ENCODE measurements at regions of chr20 and their contacts with region 1.

Region 1: DNA sequence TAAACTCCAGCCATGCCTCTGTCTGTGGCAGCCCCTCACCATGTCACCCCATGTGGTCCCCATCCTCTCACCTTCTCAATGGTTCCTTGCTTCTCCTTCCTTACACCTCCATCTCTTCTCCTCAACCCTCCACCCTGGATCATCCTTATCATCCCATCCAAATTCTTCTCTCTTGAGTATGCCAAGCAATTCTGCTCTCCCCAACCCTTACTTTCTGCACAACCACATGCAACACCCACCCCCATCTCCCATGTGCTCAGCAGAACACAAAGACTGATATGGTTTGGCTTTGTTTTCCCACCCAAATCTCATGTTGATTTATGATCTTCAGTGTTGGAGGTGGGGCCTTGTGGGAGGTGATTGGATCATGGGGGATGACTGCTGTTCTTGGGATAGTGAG is 42.5 kb upstream of the RALY start:
- DNase-seq: no peak
- H3K4me3 ChIP-seq: no peak overlapping the region
- H3K27ac ChIP-seq: no peak overlapping the region
- H3K4me1 ChIP-seq: no peaks in the 10 kb centered on the region
- H3K27me3 ChIP-seq: no peaks in the 10 kb centered on the region
- CTCF ChIP-seq: no peak

Region 2: GRCh38 chr20:33933469-33933909 is 17.7 kb before region 1 on chr20:
- CTCF ChIA-PET with region 1: no interaction called
- POLR2A ChIA-PET with region 1: interaction called, 11 read pairs
- intact Hi-C with region 1: no loop called
- DNase-seq: peak in 1 of 2 experiments; percentile 15
- H3K4me3 ChIP-seq: no peak overlapping the region
- H3K27ac ChIP-seq: no peak overlapping the region
- H3K4me1 ChIP-seq: no peaks in the 10 kb centered on the region
- H3K27me3 ChIP-seq: no peaks in the 10 kb centered on the region
- CTCF ChIP-seq: peak; percentile 39; the same call in 1 of the 2 replicates